Sigmoid colon (tissue), 7 donors: ENCODE measurements at regions of chr6 and their contacts with region 1.

Region 1: DNA sequence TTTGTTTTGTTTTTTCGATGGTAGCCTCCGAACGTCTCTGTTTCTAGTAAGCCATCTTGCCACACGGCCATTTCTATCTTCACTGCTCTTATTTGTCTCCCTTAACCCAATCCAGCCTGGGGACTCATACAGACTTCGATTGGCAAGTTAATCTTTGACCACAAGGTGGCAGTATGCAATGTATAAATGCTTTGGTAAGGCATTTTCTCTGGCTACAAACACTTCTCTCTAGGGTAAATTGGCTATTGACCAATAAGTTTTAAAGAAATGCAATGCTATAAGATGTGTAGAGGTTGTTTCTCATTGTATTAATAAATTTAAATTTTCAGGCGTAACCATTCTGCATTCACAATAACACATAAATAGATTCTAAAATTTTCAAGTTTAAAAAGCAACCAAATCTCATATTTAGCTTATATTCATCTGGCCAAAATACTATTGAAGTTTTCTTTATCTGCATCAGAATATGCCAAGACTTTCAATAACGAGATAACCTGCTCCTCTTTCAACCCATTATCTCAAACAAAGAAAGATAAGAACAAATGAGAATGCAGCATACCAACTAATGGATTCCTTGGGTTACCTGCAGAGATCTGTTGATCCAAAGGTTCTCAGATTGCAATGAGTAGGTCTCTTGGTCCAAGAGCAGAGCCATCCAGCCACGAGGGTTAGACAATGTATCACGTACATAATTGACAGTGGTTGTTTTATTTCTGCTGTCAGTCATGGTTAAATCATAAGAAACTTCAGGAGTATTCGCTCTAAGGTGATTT is 231.9 kb downstream of the PKHD1 start:
- DNase-seq: no peak
- H3K4me3 ChIP-seq: no peak overlapping the region
- H3K27ac ChIP-seq: no peak overlapping the region
- H3K4me1 ChIP-seq: no peaks in the 10 kb centered on the region
- H3K27me3 ChIP-seq: no peaks in the 10 kb centered on the region
- CTCF ChIP-seq: peak; percentile 34 to 66 (median 38)
- EP300 ChIP-seq: no peak
- POLR2A ChIP-seq: no peak

Region 2: DNA sequence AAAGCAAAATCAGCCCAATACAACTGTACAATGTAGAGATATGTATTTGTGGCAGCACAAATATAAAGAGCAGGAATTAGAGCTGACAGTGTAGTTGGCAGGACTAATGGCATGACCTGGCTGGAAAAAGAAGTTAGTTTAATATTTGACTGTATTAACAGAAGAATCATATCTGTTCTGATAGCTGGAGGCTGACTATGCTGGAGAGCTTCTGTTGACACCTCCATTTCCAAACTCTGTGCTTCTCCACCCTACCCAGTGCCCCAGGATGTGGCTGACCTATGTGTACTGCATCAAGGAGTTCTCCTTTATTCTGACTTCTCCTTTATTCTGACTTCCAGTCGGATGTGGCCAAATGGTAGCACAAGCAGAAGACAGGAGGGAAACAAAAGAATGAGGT is 67.4 kb before region 1 on chr6:
- intact Hi-C with region 1: no loop called
- DNase-seq: no peak
- H3K4me3 ChIP-seq: no peak overlapping the region
- H3K27ac ChIP-seq: no peak overlapping the region
- H3K4me1 ChIP-seq: no peaks in the 10 kb centered on the region
- H3K27me3 ChIP-seq: no peaks in the 10 kb centered on the region
- CTCF ChIP-seq: no peak
- EP300 ChIP-seq: no peak
- POLR2A ChIP-seq: no peak

Region 3: DNA sequence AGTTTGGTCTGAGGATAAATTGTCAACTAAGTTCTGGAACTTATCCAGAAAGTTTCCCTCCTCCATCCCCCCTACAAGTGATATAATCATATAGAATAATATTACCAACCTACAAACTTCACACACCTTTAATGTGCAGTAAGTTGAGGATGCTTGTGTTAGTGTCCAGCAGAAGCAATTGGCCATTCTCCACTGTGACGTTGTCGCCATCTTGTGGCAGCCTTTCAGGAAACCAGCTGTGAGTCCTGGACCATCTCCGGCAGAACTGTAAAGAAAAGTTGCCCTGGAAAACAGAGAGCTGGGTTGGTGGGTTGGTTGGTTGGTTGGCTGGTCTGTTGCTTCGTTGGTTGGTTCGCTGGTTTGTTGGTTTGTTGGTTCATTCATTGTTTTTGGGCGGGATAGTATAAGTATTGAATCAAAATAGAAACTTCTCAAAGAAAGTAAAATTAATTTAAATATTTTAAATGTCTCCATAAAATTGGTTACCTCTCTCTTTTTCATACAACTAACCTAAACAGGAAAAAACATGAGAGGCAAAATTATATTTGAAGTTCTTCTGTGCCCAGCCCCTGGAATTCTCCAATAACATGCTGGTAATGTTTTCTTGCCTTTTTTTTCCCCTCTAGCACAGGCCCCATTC is 104.4 kb after region 1 on chr6:
- intact Hi-C with region 1: loop called (anchors 10 kb)
- DNase-seq: peak; percentile 70
- H3K4me3 ChIP-seq: no peak overlapping the region
- H3K27ac ChIP-seq: peak overlapping the region in 1 of 4 donors; percentile 32
- H3K4me1 ChIP-seq: peaks cover 0 to 13% (median 3%) of the 10 kb centered on the region in 4 donors
- H3K27me3 ChIP-seq: no peaks in the 10 kb centered on the region
- CTCF ChIP-seq: peak; percentile 5 to 63 (median 40)
- EP300 ChIP-seq: no peak
- POLR2A ChIP-seq: no peak

Region 4: DNA sequence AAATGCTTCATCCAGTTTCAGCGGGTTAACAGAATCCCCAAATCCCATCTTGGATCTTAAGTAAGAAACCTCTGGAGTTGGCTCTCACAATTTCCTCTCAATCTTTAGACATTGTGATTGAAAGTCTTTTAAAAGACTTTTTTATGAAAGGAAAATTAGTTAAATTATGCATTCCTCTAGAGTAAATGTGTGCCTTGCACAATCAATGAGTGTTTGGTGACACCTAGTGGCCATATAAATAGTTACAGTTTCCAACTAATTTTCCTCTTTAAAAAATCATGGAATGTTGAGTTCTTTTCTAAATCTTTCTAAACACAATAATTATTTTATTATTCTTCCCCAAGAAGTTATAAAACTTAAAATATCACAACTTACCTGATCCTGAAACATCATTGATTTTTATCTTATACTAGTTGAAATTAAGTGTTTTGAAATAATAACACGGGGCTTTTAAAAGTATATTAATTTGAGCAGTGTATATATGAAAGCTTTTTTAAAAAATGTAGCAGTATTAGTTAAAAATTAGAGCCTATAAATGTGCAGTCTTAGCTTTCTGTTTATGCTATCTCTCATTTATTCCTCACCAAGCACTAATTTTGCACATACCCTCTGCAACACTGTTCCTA is 165.6 kb after region 1 on chr6:
- intact Hi-C with region 1: loop called (anchors 1 kb)
- DNase-seq: no peak
- H3K4me3 ChIP-seq: no peak overlapping the region
- H3K27ac ChIP-seq: no peak overlapping the region
- H3K4me1 ChIP-seq: peaks cover 0 to 26% (median 10%) of the 10 kb centered on the region in 4 donors
- H3K27me3 ChIP-seq: no peaks in the 10 kb centered on the region
- CTCF ChIP-seq: peak; percentile 53 to 84 (median 60)
- EP300 ChIP-seq: no peak
- POLR2A ChIP-seq: no peak